ENCODE measurements at regions of chr4 and their contacts with region 1.

Region 1: GRCh38 chr4:115090483-115091075 is 22.8 kb downstream of the NDST4 start:
- DNase-seq: no peak
- H3K4me3 Mint-ChIP-seq: no peak overlapping the region
- H3K27ac Mint-ChIP-seq: no peak overlapping the region
- H3K4me1 Mint-ChIP-seq: no peaks in the 10 kb centered on the region
- H3K27me3 Mint-ChIP-seq: no peaks in the 10 kb centered on the region

Region 2: DNA sequence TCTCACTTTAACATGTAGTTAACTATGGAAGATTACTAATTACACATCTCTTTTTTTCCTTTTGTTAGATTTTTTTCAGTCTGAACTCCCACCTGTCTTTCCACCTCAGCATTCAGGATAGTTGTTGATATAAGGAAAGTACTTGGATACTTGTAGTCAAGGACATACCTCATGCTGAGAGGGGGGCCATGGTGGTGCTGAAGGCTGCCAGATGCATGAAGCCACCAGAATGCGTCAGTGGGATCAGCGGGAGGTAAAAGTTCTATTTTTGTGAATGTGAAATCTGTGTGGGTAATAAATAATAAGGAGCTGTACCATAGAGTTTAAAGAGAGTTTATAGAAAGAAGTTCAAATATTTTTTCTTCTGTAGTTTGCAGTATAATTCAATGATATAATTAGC is 35.9 kb after region 1 on chr4:
- intact Hi-C with region 1: no loop called
- DNase-seq: no peak
- H3K4me3 Mint-ChIP-seq: no peak overlapping the region
- H3K27ac Mint-ChIP-seq: no peak overlapping the region
- H3K4me1 Mint-ChIP-seq: no peaks in the 10 kb centered on the region
- H3K27me3 Mint-ChIP-seq: no peaks in the 10 kb centered on the region

Region 3: GRCh38 chr4:115418635-115419396 is 328.2 kb after region 1 on chr4:
- intact Hi-C with region 1: no loop called
- DNase-seq: no peak
- H3K4me3 Mint-ChIP-seq: no peak overlapping the region
- H3K27ac Mint-ChIP-seq: no peak overlapping the region
- H3K4me1 Mint-ChIP-seq: no peaks in the 10 kb centered on the region
- H3K27me3 Mint-ChIP-seq: no peaks in the 10 kb centered on the region

Region 4: GRCh38 chr4:115851918-115852766 is 761.6 kb after region 1 on chr4:
- intact Hi-C with region 1: loop called (anchors 5 kb)
- DNase-seq: peak; percentile 68
- H3K4me3 Mint-ChIP-seq: no peak overlapping the region
- H3K27ac Mint-ChIP-seq: no peak overlapping the region
- H3K4me1 Mint-ChIP-seq: no peaks in the 10 kb centered on the region
- H3K27me3 Mint-ChIP-seq: no peaks in the 10 kb centered on the region

Measured in activated CD4-positive, alpha-beta T cell treated with anti-CD3 and anti-CD28 coated beads, Interleukin-2, amount 10 ng/mL, durations not matched to agents 24 days and 14 days (primary cell).